Naive thymus-derived CD4-positive, alpha-beta T cell (primary cell): ENCODE measurements at regions of chr1 and their contacts with region 1.

Region 1: DNA sequence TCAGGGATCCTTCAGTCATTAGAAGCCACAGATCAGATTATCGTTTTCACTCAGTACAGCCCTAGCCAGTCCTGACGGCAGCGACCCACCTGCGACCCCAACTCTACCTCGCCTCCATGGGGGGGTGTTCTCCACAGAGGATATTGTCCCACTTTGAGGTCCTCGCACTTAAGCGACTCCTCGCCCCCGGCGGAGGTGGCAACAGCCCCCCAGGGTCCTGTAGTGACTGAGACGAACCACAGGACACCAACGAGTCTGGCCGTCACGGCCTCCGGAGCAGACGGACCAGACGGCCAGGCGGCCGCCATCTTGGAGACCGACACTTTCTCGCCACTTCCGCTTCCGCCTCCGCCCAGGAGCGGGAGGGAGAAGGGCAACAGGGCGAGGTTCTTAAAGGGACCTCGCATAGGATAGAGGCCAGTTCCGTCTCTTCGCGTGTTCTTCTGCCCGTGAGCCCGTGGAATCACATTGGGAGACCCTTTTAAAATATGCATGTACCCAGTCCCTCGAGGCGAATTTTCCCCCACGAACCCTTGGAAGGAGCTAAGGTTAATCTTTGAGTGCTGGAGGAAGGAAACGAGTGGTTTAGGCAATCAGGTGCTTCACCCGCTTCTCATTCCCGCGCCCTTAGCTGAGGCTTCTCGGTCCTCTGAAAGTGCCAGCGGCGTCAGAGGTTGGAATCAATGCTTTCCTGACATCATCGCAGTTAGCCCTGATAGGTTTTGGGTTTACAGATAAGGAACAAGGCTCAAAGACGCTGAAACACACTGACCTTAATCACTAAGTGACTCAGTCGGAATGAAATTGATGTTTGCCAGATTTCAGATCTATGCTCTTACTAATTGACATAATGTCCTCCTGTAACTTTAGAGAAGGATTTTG is at the start of gene TM2D1:
- DNase-seq: peak; percentile 72 to 89 (median 81)
- ATAC-seq: peak; percentile 98
- H3K4me3 ChIP-seq: peak within 1 kb of the TSS; percentile 96
- H3K4me3 Mint-ChIP-seq: peak within 1 kb of the TSS; percentile 86 to 99 (median 96)
- H3K27ac ChIP-seq: peak within 1 kb of the TSS; percentile 92
- H3K27ac Mint-ChIP-seq: peak within 1 kb of the TSS; percentile 94 to 99 (median 97)
- H3K4me1 ChIP-seq: peaks cover 13 to 17% of the 10 kb centered on the region in 2 donors
- H3K4me1 Mint-ChIP-seq: peaks cover 16 to 44% (median 39%) of the 10 kb centered on the region in 7 donors
- H3K27me3 ChIP-seq: no peaks in the 10 kb centered on the region
- H3K27me3 Mint-ChIP-seq: no peaks in the 10 kb centered on the region
- total RNA-seq, gene TM2D1: 26.8 to 57.6 (median 41.1) TPM

Region 2: DNA sequence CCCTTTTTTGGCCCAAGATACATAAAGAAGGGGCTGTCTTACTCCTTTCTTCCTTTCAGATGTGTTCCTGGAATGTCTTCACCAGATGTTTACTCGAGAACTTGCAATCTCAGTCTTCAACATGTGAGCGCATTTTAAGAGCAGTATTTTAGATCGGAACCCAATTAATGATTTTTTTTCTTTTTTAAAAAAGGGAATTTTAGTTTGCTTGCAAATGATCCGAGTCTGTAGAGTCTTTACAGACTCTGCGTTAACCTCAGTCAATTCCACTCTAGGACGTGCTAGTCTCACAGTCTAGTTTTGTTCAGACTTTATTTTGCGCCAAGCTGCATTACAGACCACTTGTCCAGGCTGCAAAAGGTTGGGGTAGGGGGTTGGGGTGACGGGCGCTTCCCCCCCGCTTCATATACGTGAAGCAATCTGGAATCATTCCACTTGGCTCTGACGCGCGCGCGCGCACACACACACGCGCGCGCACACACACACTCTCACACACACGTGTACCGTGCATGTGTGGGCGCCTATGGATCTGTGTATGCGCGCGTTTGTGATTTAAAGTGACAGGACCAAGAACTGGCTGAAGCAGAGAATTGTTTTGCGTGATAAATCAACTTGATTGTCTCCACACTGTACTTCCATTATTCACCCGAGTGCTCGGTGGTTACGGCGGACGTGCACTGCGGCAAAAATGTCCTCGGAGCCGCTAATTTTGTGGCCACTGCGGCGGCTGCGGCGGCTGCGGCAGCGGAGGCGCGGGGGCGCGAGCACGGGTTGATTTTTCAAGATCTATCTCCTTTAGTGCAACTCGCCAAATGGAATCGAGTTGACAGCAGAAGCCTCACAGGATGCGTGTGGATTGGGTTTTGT is 668.2 kb before region 1 on chr1:
- CTCF ChIA-PET with region 1: no interaction called
- POLR2A ChIA-PET with region 1: no interaction called
- intact Hi-C with region 1: loop called in 1 of 2 experiments (anchors 5 kb)
- DNase-seq: peak in 7 of 9 donors; percentile 26 to 53 (median 47)
- ATAC-seq: peak; percentile 79
- H3K4me3 ChIP-seq: peak overlapping the region; percentile 61
- H3K4me3 Mint-ChIP-seq: peak overlapping the region; percentile 82 to 99 (median 90)
- H3K27ac ChIP-seq: no peak overlapping the region
- H3K27ac Mint-ChIP-seq: peak overlapping the region in 4 of 9 donors; percentile 13 to 58 (median 32)
- H3K4me1 ChIP-seq: peaks cover 6 to 15% of the 10 kb centered on the region in 2 donors
- H3K4me1 Mint-ChIP-seq: peaks cover 16 to 42% (median 30%) of the 10 kb centered on the region in 7 donors
- H3K27me3 ChIP-seq: peaks cover 4 to 17% of the 10 kb centered on the region in 2 donors
- H3K27me3 Mint-ChIP-seq: peaks cover 46 to 89% (median 58%) of the 10 kb centered on the region in 5 donors

Region 3: GRCh38 chr1:61515096-61515495 is 210.0 kb before region 1 on chr1:
- CTCF ChIA-PET with region 1: no interaction called
- POLR2A ChIA-PET with region 1: no interaction called
- intact Hi-C with region 1: no loop called
- DNase-seq: no peak
- ATAC-seq: no peak
- H3K4me3 ChIP-seq: no peak overlapping the region
- H3K4me3 Mint-ChIP-seq: no peak overlapping the region
- H3K27ac ChIP-seq: no peak overlapping the region
- H3K27ac Mint-ChIP-seq: no peak overlapping the region
- H3K4me1 ChIP-seq: no peaks in the 10 kb centered on the region
- H3K4me1 Mint-ChIP-seq: no peaks in the 10 kb centered on the region
- H3K27me3 ChIP-seq: no peaks in the 10 kb centered on the region
- H3K27me3 Mint-ChIP-seq: peaks cover 0 to 21% (median 0%) of the 10 kb centered on the region in 5 donors

Region 4: DNA sequence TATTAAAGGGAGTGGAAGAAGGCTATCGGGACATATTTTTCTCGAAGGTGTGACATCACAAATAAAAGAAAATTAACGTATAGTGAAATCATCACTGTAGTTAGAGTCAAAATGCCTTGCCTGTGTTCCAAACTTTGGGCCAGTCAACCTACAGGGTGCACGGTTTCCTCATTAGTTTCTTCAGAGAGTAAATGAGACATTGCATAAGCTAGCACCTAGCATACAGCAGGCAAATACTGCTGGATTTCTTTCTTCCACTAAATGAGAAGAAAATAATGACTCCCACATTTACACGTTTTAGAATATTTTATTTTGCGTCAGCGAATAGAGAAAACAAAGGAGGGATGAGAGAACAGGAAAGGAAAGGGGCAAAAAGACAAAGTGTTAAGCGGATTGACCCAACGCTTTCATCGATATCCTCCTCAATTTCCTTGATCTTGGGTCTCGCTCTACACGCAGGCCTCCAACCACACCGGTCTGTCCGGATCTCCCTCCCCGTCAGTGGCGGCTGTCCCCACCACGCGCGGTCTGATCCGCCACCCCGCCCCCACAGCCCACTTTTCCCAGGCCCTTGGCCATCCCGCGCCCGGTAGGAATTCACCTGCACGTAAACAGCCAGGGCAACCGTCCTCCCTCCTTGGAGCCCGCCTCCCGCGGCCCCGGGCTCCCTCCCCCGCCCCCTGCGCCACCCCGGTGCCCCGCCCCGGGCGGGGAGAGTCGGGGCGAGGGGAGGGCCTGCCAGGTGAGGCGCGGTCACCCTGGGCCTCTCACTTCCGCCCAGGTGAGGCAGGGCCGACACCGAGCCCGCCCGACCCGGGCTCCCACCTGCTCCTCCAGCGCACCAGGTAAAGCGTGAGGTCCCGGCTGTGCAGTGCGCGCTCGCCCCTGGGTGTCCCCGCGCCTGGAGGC is 16.9 kb after region 1 on chr1 and contains the start of gene PATJ:
- CTCF ChIA-PET with region 1: interaction called, 3 read pairs
- POLR2A ChIA-PET with region 1: interaction called, 8 read pairs
- intact Hi-C with region 1: loop called (anchors 1 kb)
- DNase-seq: peak; percentile 56 to 78 (median 73)
- ATAC-seq: peak; percentile 93
- H3K4me3 ChIP-seq: peak within 1 kb of the TSS; percentile 62
- H3K4me3 Mint-ChIP-seq: peak within 1 kb of the TSS; percentile 94 to 100 (median 97)
- H3K27ac ChIP-seq: peak within 1 kb of the TSS; percentile 76
- H3K27ac Mint-ChIP-seq: peak within 1 kb of the TSS; percentile 88 to 99 (median 96)
- H3K4me1 ChIP-seq: peaks cover 9 to 13% of the 10 kb centered on the region in 2 donors
- H3K4me1 Mint-ChIP-seq: peaks cover 17 to 46% (median 35%) of the 10 kb centered on the region in 7 donors
- H3K27me3 ChIP-seq: no peaks in the 10 kb centered on the region
- H3K27me3 Mint-ChIP-seq: no peaks in the 10 kb centered on the region
- total RNA-seq, gene PATJ: 13.4 to 64.5 (median 34.0) TPM

Region 5: DNA sequence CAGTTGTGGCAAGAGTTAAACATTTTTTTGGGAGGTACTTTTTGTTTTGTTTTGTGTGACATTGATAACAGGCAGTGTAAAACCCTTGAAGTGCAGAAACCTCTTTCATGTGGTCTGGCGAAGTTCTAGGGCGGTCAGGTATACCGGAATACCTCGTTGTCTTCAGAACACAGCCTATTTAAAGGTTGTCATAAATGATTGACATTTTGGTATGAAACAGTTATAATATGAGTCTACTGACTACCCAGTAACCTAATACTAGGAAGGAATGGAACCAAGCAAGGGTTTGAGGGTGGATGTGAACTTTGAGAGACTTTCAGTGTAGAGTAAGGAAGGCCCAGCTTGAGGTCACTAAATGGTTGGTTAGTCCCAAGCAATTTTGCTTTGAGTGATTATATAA is 57.7 kb after region 1 on chr1:
- CTCF ChIA-PET with region 1: no interaction called
- POLR2A ChIA-PET with region 1: interaction called, 3 read pairs
- intact Hi-C with region 1: loop called (anchors 1 kb)
- DNase-seq: peak in 8 of 9 donors; percentile 49 to 93 (median 90)
- ATAC-seq: peak; percentile 98
- H3K4me3 ChIP-seq: no peak overlapping the region
- H3K4me3 Mint-ChIP-seq: peak overlapping the region; percentile 66 to 94 (median 76)
- H3K27ac ChIP-seq: peak overlapping the region; percentile 39
- H3K27ac Mint-ChIP-seq: peak overlapping the region; percentile 75 to 95 (median 88)
- H3K4me1 ChIP-seq: peaks cover 26 to 32% of the 10 kb centered on the region in 2 donors
- H3K4me1 Mint-ChIP-seq: peaks cover 18 to 77% (median 67%) of the 10 kb centered on the region in 7 donors
- H3K27me3 ChIP-seq: no peaks in the 10 kb centered on the region
- H3K27me3 Mint-ChIP-seq: no peaks in the 10 kb centered on the region